ENCODE measurements at regions of chr13 and their contacts with region 1.

Region 1: DNA sequence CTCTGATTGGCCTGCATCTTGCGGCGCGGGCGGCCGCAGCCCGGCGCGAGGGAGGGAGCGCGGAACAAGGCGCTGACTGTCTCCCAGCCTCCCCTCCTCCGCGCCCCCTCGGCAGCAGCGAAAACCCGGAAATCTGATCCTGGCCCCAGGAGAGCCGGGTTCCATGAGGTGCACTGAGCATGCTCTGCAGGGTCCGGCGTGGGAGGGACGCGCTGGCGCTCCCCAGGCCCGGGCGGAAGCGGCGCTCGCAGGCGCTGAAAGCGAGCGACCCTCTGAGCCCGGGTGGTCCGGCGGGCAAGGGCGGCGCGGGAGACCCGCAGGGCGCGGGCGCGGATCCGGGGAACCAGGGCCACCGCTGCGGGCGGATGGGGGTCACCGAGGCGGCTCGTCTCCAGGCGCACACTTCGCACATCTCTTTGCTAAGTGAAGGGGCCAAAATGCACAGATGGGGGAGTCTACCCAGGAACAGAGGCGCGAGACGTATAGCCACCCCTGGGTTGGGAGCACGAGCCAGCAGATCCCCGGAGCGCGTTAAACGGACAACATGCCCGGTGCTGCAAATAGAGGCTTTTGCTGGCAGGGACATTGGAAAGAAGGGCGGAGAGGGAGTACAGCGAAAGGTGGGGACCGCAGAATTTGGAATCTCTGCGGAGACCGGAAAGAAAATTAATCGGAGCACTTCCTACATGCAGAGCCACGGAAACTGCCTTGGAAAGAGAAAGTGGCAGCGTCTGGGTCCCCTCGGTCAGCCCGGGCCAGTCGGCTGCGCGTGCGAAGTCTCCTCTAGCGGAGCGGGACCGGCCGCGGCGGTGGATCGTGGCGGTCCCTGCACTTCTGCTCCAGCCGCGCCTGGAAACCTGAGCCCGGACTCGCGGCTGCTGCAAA is 510 bp upstream of the PCDH9 start:
- DNase-seq: peak; percentile 92 to 98
- H3K4me3 ChIP-seq: peak overlapping the region; percentile 53 to 86
- H3K27ac ChIP-seq: peak overlapping the region; percentile 90
- H3K4me1 ChIP-seq: peaks cover 0 to 5% of the 10 kb centered on the region in 2 donors
- H3K27me3 ChIP-seq: no peaks in the 10 kb centered on the region
- CTCF ChIP-seq: no peak

Region 2: DNA sequence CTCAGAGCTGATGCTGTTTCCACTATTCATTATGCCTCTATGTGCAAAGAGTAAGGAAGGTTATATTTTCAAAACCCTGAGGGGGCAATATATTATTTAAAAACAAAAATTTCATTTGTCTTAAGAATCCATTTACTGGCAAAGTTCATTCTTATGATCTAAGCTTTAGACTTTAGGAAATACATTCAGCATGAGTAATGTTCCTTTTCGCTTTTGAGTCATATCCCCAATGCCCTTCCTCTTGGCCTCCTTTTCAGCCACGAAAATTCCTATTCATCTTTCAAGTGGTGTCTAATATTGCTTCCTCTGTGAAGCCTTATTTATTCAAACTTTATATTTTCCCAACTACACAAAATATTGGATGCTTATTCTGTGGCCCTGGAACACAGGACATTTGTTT is 1317.5 kb before region 1 on chr13:
- intact Hi-C with region 1: loop called (anchors 5 kb)
- DNase-seq: no peak
- H3K4me3 ChIP-seq: no peak overlapping the region
- H3K27ac ChIP-seq: peak overlapping the region; percentile 60 to 70
- H3K4me1 ChIP-seq: peaks cover 0 to 22% of the 10 kb centered on the region in 2 donors
- H3K27me3 ChIP-seq: no peaks in the 10 kb centered on the region
- CTCF ChIP-seq: no peak

Region 3: DNA sequence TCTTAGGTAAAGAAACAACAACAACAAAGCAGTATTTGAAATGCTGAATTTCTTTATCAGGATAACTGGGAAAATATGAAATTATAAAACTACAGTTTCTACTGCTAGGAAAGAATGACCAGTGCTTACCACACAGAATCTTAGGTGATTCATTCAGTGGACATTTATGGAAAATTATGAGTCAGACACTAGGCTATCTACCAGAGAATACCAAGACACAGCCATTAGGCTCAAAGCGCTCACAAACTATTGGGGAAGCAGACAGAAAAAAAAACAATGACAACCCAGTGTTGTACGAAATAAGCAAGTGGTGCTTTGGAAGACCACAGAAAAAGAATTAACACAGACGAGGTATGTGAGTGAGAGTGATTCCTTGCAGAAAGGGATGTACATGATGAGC is 1020.0 kb before region 1 on chr13:
- intact Hi-C with region 1: loop called (anchors 5 kb)
- DNase-seq: no peak
- H3K4me3 ChIP-seq: no peak overlapping the region
- H3K27ac ChIP-seq: peak overlapping the region; percentile 4 to 41
- H3K4me1 ChIP-seq: no peaks in the 10 kb centered on the region
- H3K27me3 ChIP-seq: no peaks in the 10 kb centered on the region
- CTCF ChIP-seq: no peak

Region 4: GRCh38 chr13:66994097-66994496 is 236.5 kb before region 1 on chr13:
- intact Hi-C with region 1: loop called (anchors 5 kb)
- DNase-seq: peak; percentile 18 to 80
- H3K4me3 ChIP-seq: peak overlapping the region; percentile 25 to 48
- H3K27ac ChIP-seq: peak overlapping the region in 1 of 2 donors; percentile 25
- H3K4me1 ChIP-seq: no peaks in the 10 kb centered on the region
- H3K27me3 ChIP-seq: no peaks in the 10 kb centered on the region
- CTCF ChIP-seq: peak in 2 of 3 experiments; percentile 67 to 70

Region 5: GRCh38 chr13:67147342-67148133 is 83.1 kb before region 1 on chr13:
- intact Hi-C with region 1: no loop called
- DNase-seq: no peak
- H3K4me3 ChIP-seq: no peak overlapping the region
- H3K27ac ChIP-seq: no peak overlapping the region
- H3K4me1 ChIP-seq: peaks cover 0 to 5% of the 10 kb centered on the region in 2 donors
- H3K27me3 ChIP-seq: no peaks in the 10 kb centered on the region
- CTCF ChIP-seq: no peak